ENCODE measurements at regions of chr2 and their contacts with region 1.

Region 1: DNA sequence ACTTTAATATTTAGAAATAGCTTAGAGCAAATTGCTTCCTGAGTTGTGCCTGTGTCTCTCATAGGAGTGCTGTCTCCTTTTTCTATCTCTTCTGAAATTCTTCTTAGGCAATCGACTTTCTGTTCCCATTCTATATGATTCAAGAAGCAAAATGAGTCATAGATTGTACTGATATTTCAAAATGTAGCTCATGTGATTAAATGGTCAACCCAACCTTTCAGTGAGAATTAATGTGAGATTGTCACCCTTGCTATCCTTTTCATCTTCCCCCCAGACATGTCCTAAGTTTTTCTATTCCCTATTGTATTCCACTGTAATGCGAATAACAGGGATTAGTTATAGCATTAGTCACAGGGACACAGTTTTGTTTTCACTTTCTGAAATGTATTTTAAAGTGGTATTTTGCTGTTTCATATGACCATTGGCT is 413.6 kb downstream of the THSD7B start:
- DNase-seq: no peak
- H3K4me3 ChIP-seq: no peak overlapping the region
- H3K27ac ChIP-seq: no peak overlapping the region
- H3K4me1 ChIP-seq: no peaks in the 10 kb centered on the region
- H3K27me3 ChIP-seq: no peaks in the 10 kb centered on the region
- CTCF ChIP-seq: no peak
- POLR2A ChIP-seq: no peak

Region 2: GRCh38 chr2:139099721-139100120 is 1920.8 kb after region 1 on chr2:
- intact Hi-C with region 1: loop called (anchors 5 kb)
- DNase-seq: no peak
- H3K4me3 ChIP-seq: no peak overlapping the region
- H3K27ac ChIP-seq: no peak overlapping the region
- H3K4me1 ChIP-seq: no peaks in the 10 kb centered on the region
- H3K27me3 ChIP-seq: no peaks in the 10 kb centered on the region
- CTCF ChIP-seq: no peak
- POLR2A ChIP-seq: no peak